PC-9 (cell line): ENCODE measurements at regions of chr7 and their contacts with region 1.

Region 1: GRCh38 chr7:71733107-71733870 is 601.3 kb downstream of the GALNT17 start:
- DNase-seq: peak; percentile 46 to 64
- H3K4me3 ChIP-seq: no peak overlapping the region
- H3K27ac ChIP-seq: no peak overlapping the region
- H3K4me1 ChIP-seq: no peaks in the 10 kb centered on the region
- H3K27me3 ChIP-seq: peaks cover 14% of the 10 kb centered on the region
- CTCF ChIP-seq: peak; percentile 91

Region 2: GRCh38 chr7:70829221-70830059 is 903.8 kb before region 1 on chr7:
- CTCF ChIA-PET with region 1: no interaction called
- POLR2A ChIA-PET with region 1: no interaction called
- intact Hi-C with region 1: loop called (anchors 1 kb)
- DNase-seq: peak in 1 of 2 experiments; percentile 59
- H3K4me3 ChIP-seq: no peak overlapping the region
- H3K27ac ChIP-seq: no peak overlapping the region
- H3K4me1 ChIP-seq: no peaks in the 10 kb centered on the region
- H3K27me3 ChIP-seq: no peaks in the 10 kb centered on the region
- CTCF ChIP-seq: peak; percentile 88

Region 3: DNA sequence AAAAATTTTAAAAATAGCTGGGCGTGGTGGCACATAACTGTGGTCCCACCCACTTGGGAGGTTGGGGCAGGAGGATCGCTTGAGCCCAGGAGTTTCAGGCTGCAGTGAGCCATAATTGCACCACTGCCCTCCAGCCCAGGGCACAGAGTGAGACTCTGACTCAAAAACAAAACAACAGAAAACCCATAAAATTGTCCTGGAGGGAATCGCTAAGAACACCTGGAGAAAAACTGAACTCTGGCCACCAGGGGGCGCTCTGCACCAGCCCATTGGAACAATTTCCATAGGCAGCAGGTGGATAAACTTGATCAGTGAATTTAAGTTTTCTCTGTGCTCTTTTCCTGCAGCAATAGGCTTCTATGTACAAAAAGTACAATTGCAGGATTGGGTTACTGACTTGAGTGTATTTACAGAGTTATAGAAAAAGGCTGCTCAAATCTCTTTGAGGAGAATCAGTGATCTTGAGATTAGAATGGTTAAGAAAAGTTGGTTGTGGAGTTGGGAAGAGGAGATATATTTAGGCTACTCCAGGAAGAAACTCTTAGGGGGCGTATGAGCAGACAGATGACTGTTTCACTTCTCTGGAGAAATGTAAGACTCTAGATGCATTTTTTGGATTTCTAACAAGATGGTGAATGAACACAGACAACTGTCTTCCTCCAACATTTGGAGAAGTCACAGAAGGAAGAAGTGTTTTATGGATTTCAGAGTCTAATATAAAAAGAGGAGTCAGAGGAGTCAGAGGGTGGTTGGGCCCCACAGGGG is 876.2 kb before region 1 on chr7:
- CTCF ChIA-PET with region 1: no interaction called
- POLR2A ChIA-PET with region 1: no interaction called
- intact Hi-C with region 1: loop called (anchors 1 kb)
- DNase-seq: peak in 1 of 2 experiments; percentile 62
- H3K4me3 ChIP-seq: no peak overlapping the region
- H3K27ac ChIP-seq: no peak overlapping the region
- H3K4me1 ChIP-seq: no peaks in the 10 kb centered on the region
- H3K27me3 ChIP-seq: no peaks in the 10 kb centered on the region
- CTCF ChIP-seq: peak; percentile 92

Region 4: GRCh38 chr7:71770269-71770907 is 37.1 kb after region 1 on chr7:
- CTCF ChIA-PET with region 1: no interaction called
- POLR2A ChIA-PET with region 1: no interaction called
- intact Hi-C with region 1: no loop called
- DNase-seq: no peak
- H3K4me3 ChIP-seq: no peak overlapping the region
- H3K27ac ChIP-seq: no peak overlapping the region
- H3K4me1 ChIP-seq: no peaks in the 10 kb centered on the region
- H3K27me3 ChIP-seq: peaks cover 24% of the 10 kb centered on the region
- CTCF ChIP-seq: no peak